ENCODE measurements at regions of chr4 and their contacts with region 1.

Region 1: GRCh38 chr4:1746265-1746691 is 25.0 kb downstream of the TACC3 start:
- DNase-seq: peak; percentile 68
- H3K4me3 ChIP-seq: no peak overlapping the region
- H3K27ac ChIP-seq: no peak overlapping the region
- H3K4me1 ChIP-seq: peaks cover 6% of the 10 kb centered on the region
- H3K27me3 ChIP-seq: peaks cover 24% of the 10 kb centered on the region
- CTCF ChIP-seq: peak; percentile 83

Region 2: DNA sequence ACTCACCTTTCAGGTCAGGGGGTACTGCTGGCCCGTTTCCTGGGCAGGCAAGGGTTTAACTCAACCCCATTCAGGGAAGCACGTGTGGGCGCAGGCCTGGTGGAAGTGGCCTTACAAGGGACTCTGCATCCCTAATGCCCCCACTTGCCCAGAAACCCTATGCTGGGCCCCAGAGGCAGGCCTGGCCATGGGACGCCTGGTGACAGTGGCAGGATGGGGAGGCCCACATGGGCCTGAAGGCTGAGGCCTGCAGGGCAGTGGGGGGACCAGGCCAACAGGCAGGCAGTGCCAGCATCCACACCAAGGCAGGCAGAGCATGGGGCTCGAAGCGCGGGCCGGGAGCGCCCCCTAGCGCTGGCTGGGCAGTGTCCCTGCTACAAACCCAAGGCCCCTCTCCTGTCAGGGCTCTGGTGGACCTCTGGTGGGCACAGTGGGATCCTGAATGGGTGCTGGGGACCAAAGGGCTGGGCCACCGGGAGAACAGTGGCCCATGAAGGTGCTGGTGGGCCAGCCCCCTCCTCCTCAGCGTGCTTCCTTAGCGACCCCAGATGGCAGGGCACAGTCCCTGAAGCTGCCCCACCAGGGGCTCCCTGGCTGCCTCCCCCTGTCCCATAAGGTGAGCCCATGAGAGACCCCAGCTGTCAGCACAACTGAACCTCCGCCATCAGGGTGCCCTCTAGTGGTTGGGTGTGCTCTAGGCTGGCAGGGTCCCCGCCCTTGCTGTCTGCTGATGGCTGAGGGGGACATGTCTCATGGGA is 63.7 kb after region 1 on chr4:
- intact Hi-C with region 1: loop called (anchors 5 kb)
- DNase-seq: peak; percentile 61
- H3K4me3 ChIP-seq: no peak overlapping the region
- H3K27ac ChIP-seq: no peak overlapping the region
- H3K4me1 ChIP-seq: no peaks in the 10 kb centered on the region
- H3K27me3 ChIP-seq: no peaks in the 10 kb centered on the region
- CTCF ChIP-seq: peak; percentile 84

Region 3: GRCh38 chr4:1899149-1900086 is 153.1 kb after region 1 on chr4:
- intact Hi-C with region 1: loop called (anchors 10 kb)
- DNase-seq: peak; percentile 56
- H3K4me3 ChIP-seq: no peak overlapping the region
- H3K27ac ChIP-seq: no peak overlapping the region
- H3K4me1 ChIP-seq: peaks cover 11% of the 10 kb centered on the region
- H3K27me3 ChIP-seq: no peaks in the 10 kb centered on the region
- CTCF ChIP-seq: peak; percentile 90

Measured in left ventricle myocardium inferior (tissue), 1 donor.